ENCODE measurements at regions of chr3 and their contacts with region 1.

Region 1: DNA sequence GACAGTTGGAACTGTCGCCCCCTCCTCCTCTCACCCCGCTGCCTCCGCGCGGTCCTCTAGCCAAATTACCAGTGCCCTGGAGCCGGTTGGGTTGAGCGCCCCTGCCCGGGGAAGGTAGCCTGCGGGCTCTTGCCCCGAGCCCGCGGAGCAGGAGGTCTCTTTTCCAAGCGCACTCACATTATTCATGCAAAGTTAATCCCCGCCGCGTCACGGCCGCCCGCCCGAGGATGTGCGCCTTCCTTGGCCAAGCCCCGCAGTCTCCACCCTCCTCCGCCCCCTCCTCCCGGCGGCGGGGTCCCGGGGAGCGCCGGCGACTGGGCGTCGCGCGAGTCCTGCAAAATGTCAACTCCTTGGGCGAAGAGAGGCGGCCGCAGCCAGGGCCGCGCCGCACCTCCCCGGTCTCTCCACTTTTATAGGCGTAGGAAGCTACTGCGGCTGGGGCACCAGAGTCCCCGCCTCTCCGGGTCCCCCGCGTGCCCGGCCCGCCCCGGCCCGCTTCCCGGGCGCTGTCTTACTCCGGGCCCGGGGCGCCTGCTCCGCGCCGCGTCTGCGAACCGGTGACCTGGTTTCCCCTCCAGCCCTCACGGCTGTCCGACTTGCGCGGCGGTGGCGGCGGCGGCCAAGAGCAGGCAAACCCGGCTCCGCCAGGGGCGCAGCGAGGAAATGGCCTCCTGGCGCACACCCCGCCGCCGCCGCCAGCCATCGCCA is at the start of gene THRB:
- DNase-seq: peak; percentile 75 to 86 (median 84)
- ATAC-seq: peak; percentile 47 to 75 (median 64)
- H3K4me3 ChIP-seq: peak within 1 kb of the TSS; percentile 61 to 72 (median 68)
- H3K27ac ChIP-seq: peak within 1 kb of the TSS; percentile 91 to 98 (median 96)
- H3K4me1 ChIP-seq: peaks cover 0 to 44% (median 5%) of the 10 kb centered on the region in 4 donors
- H3K27me3 ChIP-seq: no peaks in the 10 kb centered on the region
- CTCF ChIP-seq: peak in 3 of 4 donors; percentile 16 to 28 (median 19)
- POLR2A ChIP-seq: peak; percentile 85
- total RNA-seq, gene THRB: 14.5 to 29.5 (median 17.3) TPM

Region 2: GRCh38 chr3:23834082-23834870 is 660.5 kb before region 1 on chr3:
- intact Hi-C with region 1: no loop called
- DNase-seq: no peak
- ATAC-seq: peak in 1 of 4 donors; percentile 29
- H3K4me3 ChIP-seq: no peak overlapping the region
- H3K27ac ChIP-seq: no peak overlapping the region
- H3K4me1 ChIP-seq: no peaks in the 10 kb centered on the region
- H3K27me3 ChIP-seq: no peaks in the 10 kb centered on the region
- CTCF ChIP-seq: peak in 2 of 4 donors; percentile 27 to 28
- POLR2A ChIP-seq: no peak

Region 3: DNA sequence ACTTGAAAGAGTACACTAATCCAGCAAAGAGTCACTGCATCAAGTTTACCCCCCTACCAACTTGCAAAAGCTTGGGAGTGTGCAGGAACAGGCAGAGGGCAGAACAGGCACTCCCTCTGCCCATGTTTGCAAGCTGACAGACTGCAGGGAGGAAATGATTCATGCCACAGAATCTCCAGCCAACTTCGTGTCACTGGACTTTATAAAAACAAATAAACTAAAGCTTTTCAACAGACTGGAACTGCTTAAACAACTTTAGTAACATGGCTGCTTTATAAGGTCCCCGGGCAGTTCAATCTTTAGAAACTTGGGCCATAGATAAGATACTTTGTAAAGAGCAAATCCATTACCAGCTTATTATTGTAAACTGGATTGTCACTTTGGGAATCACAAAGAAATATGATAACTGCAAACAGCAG is 129.6 kb before region 1 on chr3:
- intact Hi-C with region 1: loop called in 1 of 2 experiments (anchors 10 kb)
- DNase-seq: peak; percentile 47 to 87 (median 71)
- ATAC-seq: peak; percentile 90 to 95 (median 93)
- H3K4me3 ChIP-seq: no peak overlapping the region
- H3K27ac ChIP-seq: peak overlapping the region; percentile 5 to 74 (median 46)
- H3K4me1 ChIP-seq: peaks cover 0 to 47% (median 13%) of the 10 kb centered on the region in 4 donors
- H3K27me3 ChIP-seq: no peaks in the 10 kb centered on the region
- CTCF ChIP-seq: peak in 3 of 4 donors; percentile 3 to 38 (median 17)
- POLR2A ChIP-seq: peak; percentile 85

Region 4: DNA sequence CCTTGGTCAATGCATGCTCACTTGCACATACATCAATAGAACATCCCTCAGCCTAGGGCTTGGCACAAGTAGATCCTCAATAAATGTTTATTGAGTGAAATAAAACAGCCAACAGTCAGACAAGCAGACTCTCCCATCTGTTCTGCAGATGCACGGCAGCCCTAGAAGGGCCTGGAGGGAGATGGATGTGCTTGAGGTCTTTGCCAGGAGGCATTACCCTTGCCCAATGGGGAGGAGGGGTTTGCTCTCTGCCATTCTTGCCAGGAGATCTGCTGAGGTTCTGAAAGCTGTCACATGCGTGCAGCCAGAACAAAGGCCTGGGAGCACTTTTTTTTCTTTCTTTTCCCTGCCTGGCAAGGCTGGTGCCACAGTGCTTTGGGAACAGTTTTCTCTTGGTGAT is 349.2 kb after region 1 on chr3:
- intact Hi-C with region 1: no loop called
- DNase-seq: no peak
- ATAC-seq: no peak
- H3K4me3 ChIP-seq: no peak overlapping the region
- H3K27ac ChIP-seq: no peak overlapping the region
- H3K4me1 ChIP-seq: no peaks in the 10 kb centered on the region
- H3K27me3 ChIP-seq: no peaks in the 10 kb centered on the region
- CTCF ChIP-seq: no peak
- POLR2A ChIP-seq: no peak

Region 5: DNA sequence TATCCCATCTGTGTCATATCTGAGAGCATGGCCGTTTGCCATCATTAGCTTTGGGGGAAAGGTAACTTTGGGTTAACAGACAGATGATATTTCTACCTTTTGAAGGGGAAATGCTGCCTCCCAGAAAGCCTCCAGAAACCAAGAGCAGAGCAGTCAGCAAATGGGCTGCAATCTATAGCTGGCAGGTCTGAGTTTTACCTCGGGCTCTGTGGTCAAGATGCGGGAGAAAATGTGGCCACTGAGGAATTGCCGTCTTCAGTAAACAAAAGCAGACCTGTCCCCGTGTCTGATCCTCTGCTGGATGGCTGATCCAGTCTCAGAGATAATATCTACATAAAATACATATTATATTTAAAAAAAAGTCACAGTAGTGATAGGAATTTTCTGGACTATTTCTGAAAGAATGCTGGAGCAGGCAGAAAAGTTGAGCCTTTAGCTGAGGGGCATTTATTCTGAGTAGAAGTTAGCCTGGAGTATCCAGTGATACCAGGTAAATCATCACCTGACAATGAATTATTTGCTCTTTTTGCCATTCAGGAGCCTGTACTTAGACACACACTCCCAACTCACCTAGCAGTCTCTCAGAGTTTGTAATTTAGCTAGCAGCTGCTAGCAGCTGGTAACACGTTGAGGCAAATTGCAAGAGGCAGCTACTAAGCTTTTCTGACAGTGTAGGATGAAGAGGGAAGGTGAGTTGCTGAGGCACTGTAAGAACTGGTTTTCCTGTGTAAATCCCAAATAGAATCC is 648.0 kb after region 1 on chr3:
- intact Hi-C with region 1: no loop called
- DNase-seq: no peak
- ATAC-seq: no peak
- H3K4me3 ChIP-seq: no peak overlapping the region
- H3K27ac ChIP-seq: no peak overlapping the region
- H3K4me1 ChIP-seq: no peaks in the 10 kb centered on the region
- H3K27me3 ChIP-seq: no peaks in the 10 kb centered on the region
- CTCF ChIP-seq: no peak
- POLR2A ChIP-seq: no peak

Region 6: DNA sequence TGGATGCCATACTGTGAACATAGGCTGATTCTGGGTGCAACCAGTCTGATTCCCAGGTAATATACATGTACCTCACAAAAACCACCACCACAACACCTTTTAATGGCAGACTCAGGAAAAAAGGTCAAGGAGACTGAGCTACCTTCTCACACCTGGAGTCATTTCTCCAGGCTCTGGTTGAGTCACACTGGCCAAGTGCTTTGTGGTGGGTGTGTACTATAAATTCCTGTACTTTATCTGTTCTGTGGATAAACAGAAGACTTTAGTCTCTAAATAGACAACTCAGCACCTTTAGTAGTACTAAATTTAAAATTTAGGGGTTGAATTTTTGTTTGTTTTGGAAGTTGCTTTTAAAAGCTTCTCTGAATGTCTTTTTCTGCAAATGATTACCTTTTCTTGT is 1123.3 kb after region 1 on chr3:
- intact Hi-C with region 1: no loop called
- DNase-seq: no peak
- ATAC-seq: peak; percentile 47 to 76 (median 56)
- H3K4me3 ChIP-seq: no peak overlapping the region
- H3K27ac ChIP-seq: peak overlapping the region in 2 of 3 donors; percentile 7 to 22
- H3K4me1 ChIP-seq: peaks cover 0 to 35% (median 5%) of the 10 kb centered on the region in 4 donors
- H3K27me3 ChIP-seq: no peaks in the 10 kb centered on the region
- CTCF ChIP-seq: no peak
- POLR2A ChIP-seq: no peak